ENCODE measurements at regions of chr16 and their contacts with region 1.

Region 1: DNA sequence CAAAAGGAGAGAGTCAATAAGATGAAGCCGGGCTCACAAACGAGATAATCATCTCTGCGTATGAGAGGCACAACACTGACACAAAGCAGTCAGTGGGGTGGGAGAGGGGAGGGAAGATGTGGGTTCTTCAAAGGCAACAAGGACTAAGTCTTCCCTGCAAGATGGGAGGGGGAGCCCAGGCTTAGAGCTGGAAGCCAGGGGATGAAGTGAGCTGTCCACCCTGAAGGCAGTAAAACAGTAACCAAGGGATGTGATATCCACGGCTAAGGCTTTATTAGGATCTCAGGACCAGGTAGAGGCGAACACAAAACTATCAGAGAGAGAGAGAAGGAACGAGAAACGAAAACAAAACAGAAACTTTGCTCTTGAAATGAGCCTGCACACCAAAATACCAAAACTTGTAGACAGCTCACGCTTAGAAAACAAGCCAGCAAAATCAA is 115.9 kb downstream of the DYNLRB2 start:
- DNase-seq: peak; percentile 57
- ATAC-seq: peak; percentile 92
- H3K4me3 Mint-ChIP-seq: peak overlapping the region; percentile 77
- H3K27ac Mint-ChIP-seq: peak overlapping the region; percentile 87
- H3K4me1 Mint-ChIP-seq: peaks cover 27% of the 10 kb centered on the region
- H3K27me3 Mint-ChIP-seq: no peaks in the 10 kb centered on the region

Region 2: DNA sequence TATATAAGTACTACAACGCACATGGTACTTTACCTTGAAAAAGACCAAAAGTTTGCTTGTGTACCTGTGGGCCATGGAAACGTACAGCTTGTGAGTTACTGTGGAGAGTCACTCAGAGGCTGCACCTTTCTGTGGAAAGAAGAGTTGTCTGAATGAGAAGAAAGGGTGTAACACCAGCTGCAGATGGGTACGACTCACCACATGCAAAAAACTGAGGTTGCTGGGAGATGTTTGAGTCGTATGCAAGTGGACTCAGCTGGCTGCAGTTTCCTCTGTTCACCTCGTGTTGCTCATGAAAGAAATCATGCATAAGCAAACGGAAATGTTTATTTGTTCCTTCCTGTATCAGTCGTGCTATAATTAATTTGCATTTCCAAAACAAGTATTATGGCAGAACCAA is 138.3 kb before region 1 on chr16:
- CTCF ChIA-PET with region 1: no interaction called
- POLR2A ChIA-PET with region 1: no interaction called
- intact Hi-C with region 1: loop called in 1 of 2 experiments (anchors 5 kb)
- DNase-seq: peak; percentile 58
- ATAC-seq: peak; percentile 77
- H3K4me3 Mint-ChIP-seq: no peak overlapping the region
- H3K27ac Mint-ChIP-seq: no peak overlapping the region
- H3K4me1 Mint-ChIP-seq: peaks cover 25% of the 10 kb centered on the region
- H3K27me3 Mint-ChIP-seq: peaks cover 11% of the 10 kb centered on the region

Region 3: GRCh38 chr16:80725566-80726162 is 68.9 kb after region 1 on chr16:
- CTCF ChIA-PET with region 1: no interaction called
- POLR2A ChIA-PET with region 1: no interaction called
- intact Hi-C with region 1: no loop called
- DNase-seq: no peak
- ATAC-seq: no peak
- H3K4me3 Mint-ChIP-seq: no peak overlapping the region
- H3K27ac Mint-ChIP-seq: no peak overlapping the region
- H3K4me1 Mint-ChIP-seq: peaks cover 7% of the 10 kb centered on the region
- H3K27me3 Mint-ChIP-seq: no peaks in the 10 kb centered on the region

Region 4: GRCh38 chr16:80828495-80828894 is 171.8 kb after region 1 on chr16:
- CTCF ChIA-PET with region 1: no interaction called
- POLR2A ChIA-PET with region 1: no interaction called
- intact Hi-C with region 1: no loop called
- DNase-seq: no peak
- ATAC-seq: no peak
- H3K4me3 Mint-ChIP-seq: no peak overlapping the region
- H3K27ac Mint-ChIP-seq: no peak overlapping the region
- H3K4me1 Mint-ChIP-seq: no peaks in the 10 kb centered on the region
- H3K27me3 Mint-ChIP-seq: peaks cover 14% of the 10 kb centered on the region